MCF 10A (cell line): ENCODE measurements at regions of chr6 and their contacts with region 1.

Region 1: GRCh38 chr6:148250975-148251685 is 91.5 kb upstream of the SASH1 start:
- DNase-seq: peak; percentile 66
- H3K4me3 Mint-ChIP-seq: no peak overlapping the region
- H3K27ac Mint-ChIP-seq: no peak overlapping the region
- H3K4me1 Mint-ChIP-seq: peaks cover 6% of the 10 kb centered on the region
- H3K27me3 Mint-ChIP-seq: no peaks in the 10 kb centered on the region
- CTCF ChIP-seq: peak; percentile 63

Region 2: DNA sequence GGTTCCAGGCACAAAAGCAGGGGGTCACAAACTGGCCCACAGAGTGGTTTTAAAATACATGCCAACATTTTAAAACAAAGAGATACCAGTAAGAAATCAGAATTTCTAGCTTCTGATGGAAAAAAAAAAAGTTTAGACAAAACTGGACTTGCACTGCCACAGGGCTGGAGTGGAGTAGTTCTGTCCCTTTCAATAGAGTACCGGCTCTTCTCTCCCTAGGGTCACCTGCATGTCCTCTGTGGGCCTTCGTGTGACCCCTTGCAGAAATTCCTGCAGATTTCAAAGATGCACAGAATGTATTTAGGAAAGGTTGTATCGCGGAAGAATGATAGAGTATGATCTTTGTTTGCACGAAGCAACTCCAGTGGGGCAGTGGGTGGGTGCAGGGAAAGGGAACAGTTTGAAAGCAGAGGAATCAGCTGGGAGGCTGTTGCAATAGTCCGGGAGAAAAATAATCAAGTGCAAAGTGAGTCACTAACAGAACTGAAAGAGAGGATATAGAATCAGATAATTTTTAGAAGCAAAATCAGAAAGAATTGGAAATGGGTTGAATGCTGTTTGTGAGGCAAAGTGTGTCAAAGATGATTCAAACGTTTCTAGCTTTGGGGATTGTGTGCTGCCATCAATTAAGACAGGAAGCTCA is 1144.2 kb before region 1 on chr6:
- CTCF ChIA-PET with region 1: no interaction called
- POLR2A ChIA-PET with region 1: no interaction called
- intact Hi-C with region 1: no loop called
- DNase-seq: peak; percentile 56
- H3K4me3 Mint-ChIP-seq: no peak overlapping the region
- H3K27ac Mint-ChIP-seq: no peak overlapping the region
- H3K4me1 Mint-ChIP-seq: peaks cover 12% of the 10 kb centered on the region
- H3K27me3 Mint-ChIP-seq: no peaks in the 10 kb centered on the region
- CTCF ChIP-seq: no peak

Region 3: GRCh38 chr6:147390909-147391536 is 860.1 kb before region 1 on chr6:
- CTCF ChIA-PET with region 1: no interaction called
- POLR2A ChIA-PET with region 1: no interaction called
- intact Hi-C with region 1: loop called (anchors 2 kb)
- DNase-seq: peak; percentile 43
- H3K4me3 Mint-ChIP-seq: no peak overlapping the region
- H3K27ac Mint-ChIP-seq: no peak overlapping the region
- H3K4me1 Mint-ChIP-seq: no peaks in the 10 kb centered on the region
- H3K27me3 Mint-ChIP-seq: no peaks in the 10 kb centered on the region
- CTCF ChIP-seq: peak; percentile 30

Region 4: DNA sequence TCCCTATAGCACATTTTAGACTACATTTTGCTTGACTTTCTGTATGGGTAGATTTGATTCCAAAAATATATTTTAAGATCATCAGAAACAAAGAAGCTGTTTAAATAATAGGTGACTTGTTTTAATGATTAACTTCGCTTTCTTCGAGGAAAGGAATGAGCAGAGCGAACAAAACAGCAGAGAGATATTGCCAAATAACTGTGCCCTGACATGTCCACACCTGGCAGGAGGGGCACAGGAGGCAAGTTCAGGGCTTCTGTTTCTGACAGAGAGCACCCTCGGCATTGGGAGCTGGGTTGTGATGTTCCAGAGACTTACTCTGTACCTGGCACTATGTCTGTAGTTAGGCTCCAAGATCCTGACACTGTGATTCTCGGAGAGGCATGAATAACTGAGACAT is 64.2 kb before region 1 on chr6:
- CTCF ChIA-PET with region 1: interaction called, 92 read pairs
- POLR2A ChIA-PET with region 1: interaction called, 28 read pairs
- intact Hi-C with region 1: no loop called
- DNase-seq: no peak
- H3K4me3 Mint-ChIP-seq: no peak overlapping the region
- H3K27ac Mint-ChIP-seq: peak overlapping the region; percentile 31
- H3K4me1 Mint-ChIP-seq: peaks cover 18% of the 10 kb centered on the region
- H3K27me3 Mint-ChIP-seq: no peaks in the 10 kb centered on the region
- CTCF ChIP-seq: no peak

Region 5: DNA sequence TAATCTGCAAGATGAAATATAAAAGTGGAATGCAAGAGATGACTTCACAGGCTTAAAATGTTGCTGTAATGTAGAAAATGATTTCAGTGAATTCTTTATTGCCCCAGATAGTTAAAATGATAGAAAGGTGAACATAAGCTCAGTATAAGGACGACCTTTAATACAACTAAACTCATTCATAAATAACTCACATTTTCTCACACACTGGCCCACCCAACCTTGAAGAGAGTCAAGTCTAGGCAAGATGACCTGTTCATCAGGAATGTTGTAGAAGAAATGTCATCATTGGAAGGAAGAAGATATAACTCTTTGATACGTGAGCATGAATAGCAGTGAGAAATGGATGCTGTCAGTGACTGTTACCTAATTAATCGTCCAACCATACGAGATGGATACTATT is 19.6 kb before region 1 on chr6:
- CTCF ChIA-PET with region 1: interaction called, 5 read pairs
- POLR2A ChIA-PET with region 1: interaction called, 15 read pairs
- intact Hi-C with region 1: no loop called
- DNase-seq: no peak
- H3K4me3 Mint-ChIP-seq: no peak overlapping the region
- H3K27ac Mint-ChIP-seq: peak overlapping the region; percentile 37
- H3K4me1 Mint-ChIP-seq: peaks cover 27% of the 10 kb centered on the region
- H3K27me3 Mint-ChIP-seq: no peaks in the 10 kb centered on the region
- CTCF ChIP-seq: no peak

Region 6: DNA sequence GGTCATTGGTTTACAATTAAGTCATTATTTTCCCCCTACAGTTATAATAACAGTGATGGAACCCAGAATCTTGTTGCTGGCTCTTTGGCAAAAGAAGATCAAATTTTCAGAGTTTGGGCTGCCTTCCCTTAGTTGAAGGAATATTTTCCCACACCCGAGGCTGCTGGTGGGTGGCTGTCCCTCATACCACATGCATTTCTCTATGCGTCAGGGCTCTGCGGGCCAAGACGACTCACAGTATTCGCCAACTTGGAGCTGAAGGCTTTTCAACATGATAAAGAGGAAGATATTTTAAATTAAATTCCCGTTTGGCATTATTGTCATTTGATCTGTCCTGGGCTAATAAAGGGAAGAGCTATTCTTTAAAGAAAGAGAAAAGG is 10.7 kb before region 1 on chr6:
- CTCF ChIA-PET with region 1: interaction called, 26 read pairs
- POLR2A ChIA-PET with region 1: interaction called, 15 read pairs
- intact Hi-C with region 1: no loop called
- DNase-seq: no peak
- H3K4me3 Mint-ChIP-seq: no peak overlapping the region
- H3K27ac Mint-ChIP-seq: no peak overlapping the region
- H3K4me1 Mint-ChIP-seq: peaks cover 29% of the 10 kb centered on the region
- H3K27me3 Mint-ChIP-seq: no peaks in the 10 kb centered on the region
- CTCF ChIP-seq: no peak

Region 7: DNA sequence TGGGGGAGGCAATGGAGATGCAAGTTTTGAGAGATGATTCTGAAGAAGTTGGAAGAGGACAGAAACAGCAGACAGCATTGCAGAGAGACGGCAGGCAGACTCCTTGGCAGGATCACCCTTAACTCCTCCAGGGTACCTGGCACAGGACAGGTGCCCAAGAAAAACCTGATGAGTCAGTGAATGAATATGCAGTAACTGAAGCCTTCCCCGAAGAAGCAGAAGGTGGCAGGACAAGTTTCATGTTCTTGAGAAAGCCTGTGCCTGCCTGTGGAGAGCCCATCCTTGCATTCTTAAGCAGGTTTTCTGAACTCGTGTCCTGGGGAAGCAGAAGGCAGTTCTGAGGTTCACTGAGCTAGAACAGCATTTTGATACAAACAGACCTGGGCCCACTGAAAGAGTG is 11.9 kb after region 1 on chr6:
- CTCF ChIA-PET with region 1: interaction called, 21 read pairs
- POLR2A ChIA-PET with region 1: interaction called, 3 read pairs
- intact Hi-C with region 1: no loop called
- DNase-seq: peak; percentile 77
- H3K4me3 Mint-ChIP-seq: no peak overlapping the region
- H3K27ac Mint-ChIP-seq: no peak overlapping the region
- H3K4me1 Mint-ChIP-seq: peaks cover 24% of the 10 kb centered on the region
- H3K27me3 Mint-ChIP-seq: no peaks in the 10 kb centered on the region
- CTCF ChIP-seq: no peak

Region 8: DNA sequence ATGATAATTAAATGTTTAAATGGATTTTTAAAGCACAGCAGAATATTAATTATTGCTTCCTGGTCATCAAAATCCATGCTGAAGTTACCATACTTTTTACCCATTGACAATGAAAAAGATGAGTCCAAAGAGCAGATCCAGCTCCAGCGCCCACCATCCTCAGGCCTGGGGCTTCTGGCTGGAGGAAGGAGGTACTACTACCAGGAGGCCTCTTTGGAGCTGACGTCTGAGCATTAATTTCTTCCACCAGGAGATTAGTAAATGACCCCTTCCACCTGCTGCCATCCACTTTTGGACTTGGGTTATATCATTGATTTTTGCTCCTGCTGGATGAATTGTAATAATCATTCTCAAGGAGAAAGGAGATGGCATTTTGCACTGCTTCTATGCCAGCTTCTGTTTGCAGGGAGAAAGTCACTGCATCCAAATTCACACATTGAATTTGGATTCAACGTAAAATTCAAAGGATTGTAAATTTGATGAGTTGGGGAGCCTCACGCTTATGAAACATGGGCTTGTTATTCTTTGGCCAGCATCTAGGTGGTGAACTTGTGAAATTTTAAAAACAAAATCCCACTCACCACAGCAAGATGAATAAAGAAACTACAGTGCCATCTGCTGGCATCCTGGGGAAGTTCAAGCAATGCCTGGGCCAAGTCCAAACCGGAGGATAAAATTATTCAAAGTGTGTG is 213.3 kb after region 1 on chr6:
- CTCF ChIA-PET with region 1: interaction called, 10 read pairs
- POLR2A ChIA-PET with region 1: interaction called, 3 read pairs
- intact Hi-C with region 1: loop called (anchors 1 kb)
- DNase-seq: peak; percentile 73
- H3K4me3 Mint-ChIP-seq: no peak overlapping the region
- H3K27ac Mint-ChIP-seq: peak overlapping the region; percentile 57
- H3K4me1 Mint-ChIP-seq: peaks cover 27% of the 10 kb centered on the region
- H3K27me3 Mint-ChIP-seq: no peaks in the 10 kb centered on the region
- CTCF ChIP-seq: peak; percentile 96